Prostate gland (tissue), 2 donors: ENCODE measurements at regions of chr6 and their contacts with region 1.

Region 1: GRCh38 chr6:118283766-118284165 is 264.3 kb upstream of the PLN start:
- DNase-seq: peak; percentile 34
- H3K4me3 ChIP-seq: no peak overlapping the region
- H3K27ac ChIP-seq: no peak overlapping the region
- H3K4me1 ChIP-seq: no peaks in the 10 kb centered on the region
- H3K27me3 ChIP-seq: no peaks in the 10 kb centered on the region
- CTCF ChIP-seq: peak; percentile 13 to 64 (median 56)
- POLR2A ChIP-seq: no peak

Region 2: GRCh38 chr6:118298476-118299427 is 15.0 kb after region 1 on chr6:
- intact Hi-C with region 1: no loop called
- DNase-seq: no peak
- H3K4me3 ChIP-seq: no peak overlapping the region
- H3K27ac ChIP-seq: no peak overlapping the region
- H3K4me1 ChIP-seq: no peaks in the 10 kb centered on the region
- H3K27me3 ChIP-seq: no peaks in the 10 kb centered on the region
- CTCF ChIP-seq: no peak
- POLR2A ChIP-seq: no peak

Region 3: DNA sequence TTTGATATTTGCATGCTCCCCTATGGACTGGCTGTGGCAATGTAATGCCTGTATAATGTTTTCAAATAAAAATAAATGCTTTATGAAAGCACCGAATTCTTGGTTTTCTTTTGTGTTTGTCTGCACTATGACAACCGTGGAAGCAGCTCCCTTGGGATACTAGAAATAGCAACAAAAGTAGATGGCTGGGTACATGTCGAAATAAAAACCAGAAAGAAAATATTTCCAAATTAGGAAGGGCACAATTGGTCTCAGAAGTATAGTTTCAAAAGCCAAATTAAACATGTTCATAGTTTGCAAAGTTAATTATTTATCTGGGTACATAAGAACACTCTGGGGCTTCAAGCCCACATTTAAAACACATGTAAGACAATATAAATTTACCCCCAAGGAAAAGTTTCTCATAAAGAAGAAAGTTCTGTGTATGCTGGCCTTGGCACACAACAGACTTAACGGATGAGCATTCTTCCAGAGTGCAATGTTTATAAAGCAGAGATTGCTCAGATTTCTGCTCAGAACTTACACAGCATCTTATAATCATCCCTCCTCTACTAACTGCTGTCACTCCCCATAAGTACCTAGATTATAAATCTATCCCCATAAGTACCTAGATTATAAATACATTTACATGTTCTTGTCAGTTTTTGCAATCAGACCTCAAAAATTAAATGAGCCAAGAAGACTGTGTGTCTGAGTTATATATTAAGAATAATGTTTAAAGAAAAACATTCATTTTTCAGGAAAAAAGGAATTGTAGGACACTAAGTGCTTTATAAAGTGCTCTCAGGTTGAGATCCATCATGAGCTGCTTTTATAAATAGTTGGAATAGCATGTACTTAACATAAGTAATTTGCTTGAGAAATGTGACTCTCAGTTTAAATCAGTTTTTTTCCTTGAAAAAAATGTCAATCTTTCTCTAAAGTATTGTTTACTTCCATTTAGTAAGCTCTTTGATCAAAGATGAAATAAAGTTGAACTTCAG is 34.1 kb after region 1 on chr6:
- intact Hi-C with region 1: no loop called
- DNase-seq: no peak
- H3K4me3 ChIP-seq: no peak overlapping the region
- H3K27ac ChIP-seq: peak overlapping the region; percentile 0 to 24
- H3K4me1 ChIP-seq: no peaks in the 10 kb centered on the region
- H3K27me3 ChIP-seq: no peaks in the 10 kb centered on the region
- CTCF ChIP-seq: no peak
- POLR2A ChIP-seq: no peak

Region 4: DNA sequence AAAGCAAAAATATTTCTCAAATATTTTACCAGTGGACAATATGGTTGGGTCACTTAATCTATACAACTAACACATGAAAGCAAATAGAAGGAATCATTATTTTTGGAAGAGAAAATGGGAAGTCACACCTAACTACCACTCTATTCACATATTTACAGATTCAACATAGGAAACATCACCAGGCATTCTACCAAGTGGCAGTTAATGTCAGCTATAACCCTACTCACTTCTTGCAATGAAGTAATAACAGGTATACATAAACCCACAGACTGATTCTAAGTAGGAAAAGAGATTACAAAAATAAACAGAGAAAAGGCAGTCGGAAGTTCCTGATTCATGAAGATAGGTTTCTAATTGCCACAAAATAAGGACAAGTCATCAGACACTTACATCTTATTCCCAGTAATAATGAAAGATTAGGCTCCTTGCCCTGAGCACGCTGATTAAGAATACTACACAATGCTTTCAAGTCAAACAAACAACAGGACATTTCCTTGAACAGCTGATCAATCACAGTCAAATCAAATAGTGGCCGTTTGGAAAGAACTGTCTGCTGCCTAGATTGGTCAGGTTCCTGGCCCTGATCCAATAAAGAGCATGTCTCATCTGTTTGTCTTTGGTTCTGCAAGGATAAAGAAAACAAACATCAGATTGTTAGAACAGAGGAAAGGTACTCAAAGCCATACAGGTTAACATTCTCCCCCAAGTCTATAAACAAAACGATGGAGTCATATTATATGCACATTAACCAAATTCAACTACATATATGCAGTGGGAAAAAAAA is 185.1 kb after region 1 on chr6:
- intact Hi-C with region 1: no loop called
- DNase-seq: peak; percentile 5
- H3K4me3 ChIP-seq: no peak overlapping the region
- H3K27ac ChIP-seq: no peak overlapping the region
- H3K4me1 ChIP-seq: no peaks in the 10 kb centered on the region
- H3K27me3 ChIP-seq: no peaks in the 10 kb centered on the region
- CTCF ChIP-seq: no peak
- POLR2A ChIP-seq: no peak

Region 5: GRCh38 chr6:118495485-118496280 is 211.9 kb after region 1 on chr6:
- intact Hi-C with region 1: no loop called
- DNase-seq: no peak
- H3K4me3 ChIP-seq: no peak overlapping the region
- H3K27ac ChIP-seq: no peak overlapping the region
- H3K4me1 ChIP-seq: no peaks in the 10 kb centered on the region
- H3K27me3 ChIP-seq: no peaks in the 10 kb centered on the region
- CTCF ChIP-seq: no peak
- POLR2A ChIP-seq: no peak

Region 6: GRCh38 chr6:118509009-118509617 is 225.3 kb after region 1 on chr6:
- intact Hi-C with region 1: loop called (anchors 5 kb)
- DNase-seq: no peak
- H3K4me3 ChIP-seq: no peak overlapping the region
- H3K27ac ChIP-seq: no peak overlapping the region
- H3K4me1 ChIP-seq: no peaks in the 10 kb centered on the region
- H3K27me3 ChIP-seq: no peaks in the 10 kb centered on the region
- CTCF ChIP-seq: peak in 3 of 4 experiments; percentile 31 to 46 (median 37)
- POLR2A ChIP-seq: no peak

Region 7: DNA sequence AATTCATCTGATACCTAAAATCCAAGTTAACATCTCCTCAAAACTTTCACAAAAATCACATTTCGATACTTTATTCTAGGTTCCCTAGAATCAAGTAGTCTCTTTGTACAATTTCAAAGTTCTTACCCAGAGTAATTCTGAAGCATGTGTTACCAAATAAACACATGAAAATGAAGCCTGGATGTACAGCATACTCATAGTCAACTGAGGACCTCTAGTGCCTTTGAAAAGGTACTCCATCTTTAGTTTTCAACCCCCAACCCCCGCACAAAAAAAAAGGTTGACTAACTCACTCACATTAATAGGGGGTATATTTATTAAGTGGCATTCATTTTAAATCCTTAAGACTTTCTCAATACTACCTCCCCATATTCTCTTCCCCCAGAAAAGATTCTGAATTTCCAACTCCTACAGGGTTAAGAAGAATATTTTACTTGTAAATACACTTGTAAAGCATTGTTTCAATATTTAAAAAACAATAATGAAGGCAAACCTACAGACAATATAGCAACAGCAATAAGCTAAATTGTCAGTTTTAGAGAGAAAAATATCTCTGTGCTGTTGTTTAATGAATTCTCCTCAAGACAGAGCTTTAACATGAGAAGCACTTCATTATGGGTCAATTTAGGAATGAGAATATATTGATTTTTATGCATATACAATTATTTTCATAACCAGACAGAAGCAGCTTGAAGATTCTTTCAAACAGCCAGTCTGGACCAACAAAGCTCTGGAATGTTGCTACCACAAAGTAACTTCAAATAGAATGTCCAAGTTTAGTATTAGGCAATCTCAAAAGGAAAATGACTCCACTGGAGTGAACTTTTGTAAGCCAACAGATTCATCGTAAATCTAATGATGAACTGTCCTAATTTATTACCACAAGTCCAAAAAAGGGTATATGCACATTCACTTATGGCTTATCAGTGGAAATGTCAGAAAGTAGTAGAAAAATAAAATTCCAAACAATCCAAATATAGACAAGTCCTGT is 267.6 kb after region 1 on chr6:
- intact Hi-C with region 1: loop called (anchors 10 kb)
- DNase-seq: no peak
- H3K4me3 ChIP-seq: no peak overlapping the region
- H3K27ac ChIP-seq: no peak overlapping the region
- H3K4me1 ChIP-seq: no peaks in the 10 kb centered on the region
- H3K27me3 ChIP-seq: no peaks in the 10 kb centered on the region
- CTCF ChIP-seq: peak in 3 of 4 experiments; percentile 33 to 62 (median 58)
- POLR2A ChIP-seq: no peak

Region 8: GRCh38 chr6:118580585-118581419 is 297.0 kb after region 1 on chr6:
- intact Hi-C with region 1: loop called (anchors 5 kb)
- DNase-seq: peak; percentile 14
- H3K4me3 ChIP-seq: no peak overlapping the region
- H3K27ac ChIP-seq: no peak overlapping the region
- H3K4me1 ChIP-seq: no peaks in the 10 kb centered on the region
- H3K27me3 ChIP-seq: no peaks in the 10 kb centered on the region
- CTCF ChIP-seq: peak in 3 of 4 experiments; percentile 61 to 74 (median 65)
- POLR2A ChIP-seq: no peak

Region 9: DNA sequence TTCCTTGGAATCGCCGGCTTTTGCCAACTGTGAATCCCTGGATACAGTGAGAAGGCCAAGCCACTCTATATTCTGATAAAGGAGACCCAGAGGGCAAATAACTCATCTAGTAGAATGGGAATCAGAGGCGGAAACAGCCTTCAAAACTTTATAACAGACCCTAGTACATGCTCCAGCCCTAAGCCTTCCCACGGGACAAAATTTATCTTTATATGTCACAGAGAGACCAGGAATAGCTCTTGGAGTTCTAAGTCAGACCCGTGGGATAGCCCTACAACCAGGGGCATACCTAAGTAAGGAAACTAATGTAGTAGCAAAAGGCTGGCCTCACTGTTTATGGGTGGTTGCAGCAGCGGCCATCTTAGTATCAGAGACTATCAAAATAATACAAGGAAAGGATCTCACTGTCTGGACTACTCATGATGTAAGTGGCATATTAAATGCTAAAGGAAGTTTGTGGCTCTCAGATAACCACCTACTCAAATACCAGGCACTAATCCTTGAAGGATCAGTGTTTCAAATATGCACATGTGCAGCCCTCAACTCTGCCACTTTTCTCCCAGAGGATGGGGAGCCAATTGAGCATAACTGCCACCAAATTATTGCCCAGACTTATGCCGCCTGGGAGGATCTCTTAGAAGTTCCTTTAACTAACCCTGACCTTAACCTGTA is 338.2 kb after region 1 on chr6:
- intact Hi-C with region 1: loop called (anchors 5 kb)
- DNase-seq: no peak
- H3K4me3 ChIP-seq: no peak overlapping the region
- H3K27ac ChIP-seq: no peak overlapping the region
- H3K4me1 ChIP-seq: no peaks in the 10 kb centered on the region
- H3K27me3 ChIP-seq: no peaks in the 10 kb centered on the region
- CTCF ChIP-seq: no peak
- POLR2A ChIP-seq: no peak